Activated naive CD4-positive, alpha-beta T cell treated with anti-CD3 and anti-CD28 coated beads for 36 hours (primary cell): ENCODE measurements at regions of chrX and their contacts with region 1.

Region 1: DNA sequence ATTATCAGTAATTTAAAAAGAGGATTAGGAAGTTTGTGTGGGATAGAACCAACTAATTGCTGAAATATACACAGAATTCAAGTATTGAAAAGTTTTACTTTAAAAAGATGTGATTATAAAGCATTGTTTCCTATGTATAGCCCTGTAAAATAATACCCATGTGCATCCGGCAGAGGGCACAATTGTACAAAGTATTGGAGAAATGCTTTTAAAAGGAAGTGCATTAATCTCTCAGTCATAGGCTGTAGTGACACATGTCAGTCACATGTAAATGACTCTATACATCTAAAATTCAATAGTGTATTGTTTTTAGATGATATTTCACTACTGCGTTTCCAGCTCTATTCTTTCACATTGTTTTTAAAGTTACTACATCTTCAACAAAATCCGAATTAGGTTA is 9.7 kb upstream of the GEMIN8 start:
- DNase-seq: peak; percentile 72
- H3K4me3 Mint-ChIP-seq: no peak overlapping the region
- H3K27ac Mint-ChIP-seq: no peak overlapping the region
- H3K4me1 Mint-ChIP-seq: peaks cover 4% of the 10 kb centered on the region
- H3K27me3 Mint-ChIP-seq: no peaks in the 10 kb centered on the region

Region 2: GRCh38 chrX:13864264-13864663 is 175.1 kb before region 1 on chrX:
- CTCF ChIA-PET with region 1: no interaction called
- intact Hi-C with region 1: no loop called
- DNase-seq: no peak
- H3K4me3 Mint-ChIP-seq: no peak overlapping the region
- H3K27ac Mint-ChIP-seq: no peak overlapping the region
- H3K4me1 Mint-ChIP-seq: no peaks in the 10 kb centered on the region
- H3K27me3 Mint-ChIP-seq: peaks cover 6% of the 10 kb centered on the region

Region 3: DNA sequence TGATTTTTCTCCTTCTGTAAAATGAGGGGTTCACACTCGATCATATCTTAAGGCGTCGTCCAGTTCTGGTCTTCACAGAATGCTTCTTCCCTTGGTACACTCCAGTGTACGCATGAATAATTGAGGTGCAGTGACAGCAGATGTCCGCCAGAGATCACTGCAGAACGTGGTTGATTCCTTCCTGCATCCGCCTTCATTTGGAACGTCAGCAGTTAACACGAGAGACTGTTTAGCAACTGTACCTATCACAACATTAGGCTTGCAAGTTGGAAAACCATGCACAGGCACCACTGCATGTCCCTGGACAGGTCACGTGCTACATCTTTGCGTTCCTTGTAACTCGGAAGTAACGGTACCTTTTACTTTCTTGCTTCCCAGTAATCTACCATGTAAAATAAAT is 56.4 kb after region 1 on chrX:
- CTCF ChIA-PET with region 1: no interaction called
- intact Hi-C with region 1: loop called (anchors 1 kb)
- DNase-seq: peak; percentile 56
- H3K4me3 Mint-ChIP-seq: no peak overlapping the region
- H3K27ac Mint-ChIP-seq: no peak overlapping the region
- H3K4me1 Mint-ChIP-seq: peaks cover 2% of the 10 kb centered on the region
- H3K27me3 Mint-ChIP-seq: no peaks in the 10 kb centered on the region

Region 4: GRCh38 chrX:14528629-14529289 is 489.4 kb after region 1 on chrX:
- CTCF ChIA-PET with region 1: interaction called, 3 read pairs
- intact Hi-C with region 1: loop called (anchors 1 kb)
- DNase-seq: peak; percentile 77
- H3K4me3 Mint-ChIP-seq: no peak overlapping the region
- H3K27ac Mint-ChIP-seq: no peak overlapping the region
- H3K4me1 Mint-ChIP-seq: peaks cover 2% of the 10 kb centered on the region
- H3K27me3 Mint-ChIP-seq: peaks cover 2% of the 10 kb centered on the region